ENCODE measurements at regions of chr1 and their contacts with region 1.

Region 1: DNA sequence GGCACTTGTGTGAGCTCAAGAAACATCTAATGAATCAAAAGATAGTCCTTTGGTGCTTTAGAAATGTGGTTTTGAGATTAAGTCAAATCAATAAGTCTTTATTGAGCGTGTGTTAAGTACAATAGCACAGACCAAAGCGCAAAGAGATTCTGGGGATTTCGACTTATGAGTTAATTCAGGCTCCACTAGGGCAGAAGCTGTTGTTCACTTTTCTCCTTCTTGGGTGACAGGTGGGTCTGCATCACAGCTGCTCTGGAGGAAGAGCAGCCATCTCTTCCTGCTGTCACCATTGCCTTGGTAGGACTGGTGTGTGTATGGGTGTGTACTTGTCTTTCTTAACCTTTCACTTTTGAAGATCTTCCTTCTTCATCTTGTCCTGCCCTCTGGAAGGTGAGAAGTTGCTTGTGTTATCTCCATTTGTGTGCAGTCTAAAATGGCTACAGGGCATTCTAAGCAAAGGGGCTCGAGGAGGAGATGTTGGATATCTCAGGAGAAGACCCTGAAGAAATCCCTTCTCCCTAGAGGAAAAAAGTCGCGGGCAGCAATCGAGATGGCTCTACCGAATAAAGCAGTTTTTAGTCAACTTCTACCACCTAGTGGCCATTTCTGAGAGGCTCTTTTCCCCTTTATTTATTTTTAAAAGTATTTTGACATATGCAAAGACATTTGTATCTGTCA is 22.9 kb upstream of the DISC1 start:
- DNase-seq: peak; percentile 24 to 27
- H3K4me3 ChIP-seq: peak overlapping the region in 2 of 3 donors; percentile 10 to 15
- H3K27ac ChIP-seq: no peak overlapping the region
- H3K4me1 ChIP-seq: no peaks in the 10 kb centered on the region
- H3K27me3 ChIP-seq: no peaks in the 10 kb centered on the region
- CTCF ChIP-seq: peak; percentile 48 to 81 (median 69)
- POLR2A ChIP-seq: no peak

Region 2: DNA sequence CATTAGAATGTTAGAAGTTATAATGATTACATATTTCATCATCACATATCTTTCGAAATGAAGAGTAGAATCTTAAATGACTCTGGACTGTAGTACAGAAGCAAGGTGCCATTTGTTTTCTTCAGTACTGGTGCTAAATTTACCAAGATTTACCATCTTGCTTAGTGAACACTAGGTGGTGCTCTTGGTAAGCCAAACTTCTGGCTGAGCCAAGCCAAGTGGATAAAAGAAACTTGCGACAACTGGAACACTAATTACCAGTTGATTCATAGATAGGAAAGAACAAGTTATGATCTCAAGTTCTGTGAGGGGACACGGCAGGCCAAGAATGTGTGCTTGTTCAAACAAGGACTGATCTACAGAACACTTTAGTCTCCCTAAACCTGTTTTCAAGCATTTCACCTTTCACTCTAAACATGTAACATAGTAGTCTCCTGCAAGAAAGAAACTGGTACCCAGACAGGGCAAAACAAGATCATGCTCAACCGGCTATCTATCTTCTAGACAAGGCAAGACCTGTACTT is 245.8 kb before region 1 on chr1:
- intact Hi-C with region 1: loop called (anchors 5 kb)
- DNase-seq: peak; percentile 50 to 54
- H3K4me3 ChIP-seq: no peak overlapping the region
- H3K27ac ChIP-seq: peak overlapping the region in 1 of 3 donors; percentile 36
- H3K4me1 ChIP-seq: peaks cover 0 to 7% of the 10 kb centered on the region in 2 donors
- H3K27me3 ChIP-seq: no peaks in the 10 kb centered on the region
- CTCF ChIP-seq: peak in 5 of 6 experiments; percentile 23 to 91 (median 80)
- POLR2A ChIP-seq: no peak

Measured in thyroid gland (tissue), 4 donors.